ENCODE measurements at regions of chr11 and their contacts with region 1.

Region 1: DNA sequence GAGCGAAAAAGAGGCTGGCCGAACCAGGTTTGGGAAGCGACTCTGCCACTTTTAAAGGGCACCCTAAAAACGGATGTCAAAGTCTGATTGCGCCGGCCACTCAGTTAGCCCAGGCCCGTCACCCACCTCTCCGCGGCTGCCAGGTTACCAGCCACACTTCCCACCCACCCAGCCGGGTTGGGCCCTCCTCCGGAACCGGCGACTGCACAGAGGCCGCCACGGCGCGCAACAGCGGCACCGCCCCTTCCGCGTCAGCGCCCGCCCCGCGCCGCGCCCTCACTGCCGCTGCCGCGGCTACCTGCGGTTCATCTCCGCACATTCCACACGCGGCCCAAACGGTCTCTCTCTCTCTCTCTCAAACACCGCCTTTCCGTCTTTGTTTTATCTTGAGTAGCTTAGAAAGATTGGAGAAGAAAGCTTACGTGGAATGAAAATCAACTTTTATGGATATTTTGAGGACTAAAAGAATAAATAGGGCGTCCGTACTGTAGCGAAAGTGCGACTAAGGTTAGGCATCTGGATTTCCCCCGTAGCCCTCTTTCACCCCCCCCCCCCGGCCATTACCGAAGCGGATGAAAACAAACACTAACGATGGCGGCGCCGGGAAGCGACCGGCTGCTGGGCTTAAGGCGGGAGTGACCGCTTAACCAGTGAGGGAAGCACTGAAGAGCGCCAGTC is at the starts of genes ATG13 and HARBI1:
- DNase-seq: peak; percentile 98
- H3K4me3 Mint-ChIP-seq: peak within 1 kb of the TSS; percentile 93
- H3K27ac Mint-ChIP-seq: peak within 1 kb of the TSS; percentile 100
- H3K4me1 Mint-ChIP-seq: peaks cover 35% of the 10 kb centered on the region
- H3K27me3 Mint-ChIP-seq: no peaks in the 10 kb centered on the region
- total RNA-seq, gene ATG13: 55.4 and 55.6 TPM in 2 replicates
- total RNA-seq, gene HARBI1: 4.3 and 4.5 TPM in 2 replicates

Region 2: GRCh38 chr11:46389450-46390253 is 227.5 kb before region 1 on chr11:
- intact Hi-C with region 1: loop called (anchors 1 kb)
- DNase-seq: peak; percentile 88
- H3K4me3 Mint-ChIP-seq: peak overlapping the region; percentile 72
- H3K27ac Mint-ChIP-seq: peak overlapping the region; percentile 17
- H3K4me1 Mint-ChIP-seq: peaks cover 26% of the 10 kb centered on the region
- H3K27me3 Mint-ChIP-seq: peaks cover 62% of the 10 kb centered on the region

Region 3: DNA sequence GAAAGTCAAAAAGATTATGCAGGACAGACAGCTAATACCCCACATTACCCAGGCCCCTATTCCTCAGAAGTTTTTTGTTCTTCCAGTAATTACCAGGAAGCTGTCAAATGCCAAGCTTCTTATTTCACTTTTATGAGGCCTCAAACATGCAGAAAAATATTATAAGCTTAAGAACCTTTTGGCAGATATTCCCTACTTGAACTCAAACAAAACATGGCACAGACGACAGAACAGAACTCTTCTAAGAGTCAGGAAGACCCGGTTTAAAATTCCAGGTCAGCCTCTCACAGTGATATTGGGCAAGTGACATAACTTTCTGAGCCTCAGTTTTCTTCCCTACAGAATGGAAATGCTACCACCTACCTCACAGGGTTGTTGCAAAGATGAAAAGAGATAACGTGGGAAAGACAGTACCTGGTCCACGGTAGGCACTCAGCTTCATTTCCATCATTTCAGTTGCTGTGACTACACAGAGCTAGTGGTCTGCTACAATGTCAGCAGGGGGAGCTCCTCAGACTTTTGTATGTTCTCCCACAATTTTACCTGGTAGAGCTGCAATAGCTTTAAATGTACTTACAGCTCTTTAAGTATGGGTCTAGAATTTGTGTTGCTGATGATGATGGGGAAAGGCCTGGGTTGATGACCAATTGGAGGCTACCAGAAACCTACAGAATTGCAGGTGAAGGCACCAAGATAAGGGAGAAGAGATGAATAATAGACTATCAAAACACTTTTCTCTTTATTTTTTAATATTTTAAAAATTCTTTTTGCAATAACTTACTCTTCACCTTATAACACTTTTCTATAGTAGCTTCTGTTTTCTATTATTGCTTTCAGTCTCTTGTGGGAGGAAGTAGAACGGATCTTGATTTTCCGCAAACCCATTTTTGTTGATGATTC is 127.2 kb before region 1 on chr11:
- intact Hi-C with region 1: loop called (anchors 5 kb)
- DNase-seq: peak; percentile 79
- H3K4me3 Mint-ChIP-seq: no peak overlapping the region
- H3K27ac Mint-ChIP-seq: no peak overlapping the region
- H3K4me1 Mint-ChIP-seq: peaks cover 9% of the 10 kb centered on the region
- H3K27me3 Mint-ChIP-seq: no peaks in the 10 kb centered on the region

Region 4: GRCh38 chr11:46547579-46547978 is 69.6 kb before region 1 on chr11:
- intact Hi-C with region 1: no loop called
- DNase-seq: no peak
- H3K4me3 Mint-ChIP-seq: no peak overlapping the region
- H3K27ac Mint-ChIP-seq: no peak overlapping the region
- H3K4me1 Mint-ChIP-seq: peaks cover 4% of the 10 kb centered on the region
- H3K27me3 Mint-ChIP-seq: no peaks in the 10 kb centered on the region

Region 5: DNA sequence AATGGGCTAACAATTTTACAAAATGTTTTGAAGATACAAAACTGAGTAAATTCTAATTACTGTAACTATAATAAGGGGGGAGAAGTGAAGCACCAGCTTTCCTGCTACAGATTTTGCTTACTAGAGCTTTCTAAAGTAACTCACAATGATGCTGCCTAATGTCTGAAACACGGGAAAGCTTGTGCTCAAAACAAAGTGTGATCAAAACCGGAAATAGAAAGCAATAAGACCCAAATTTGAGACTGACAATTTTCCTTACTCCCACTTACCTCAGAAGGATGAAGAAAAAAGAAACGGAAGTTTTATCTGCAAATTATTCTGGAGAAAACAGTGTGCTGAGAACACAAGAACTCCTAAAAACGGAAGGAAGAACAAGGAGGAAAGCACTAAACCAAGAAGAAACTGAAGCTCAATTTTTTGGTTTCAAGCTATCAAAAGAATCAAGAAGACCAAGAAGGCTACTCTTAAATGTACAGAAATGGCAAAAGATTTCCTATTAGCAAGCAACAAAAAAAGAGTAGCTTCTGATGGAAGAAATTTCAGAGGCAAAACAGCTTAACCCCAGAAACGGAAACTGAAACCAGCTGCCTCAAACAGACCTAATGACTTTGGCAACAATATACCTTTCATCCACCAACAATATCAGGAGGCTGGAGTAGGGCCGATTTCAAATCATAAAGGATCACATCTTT is 56.7 kb before region 1 on chr11:
- intact Hi-C with region 1: loop called (anchors 2 kb)
- DNase-seq: peak; percentile 81
- H3K4me3 Mint-ChIP-seq: peak overlapping the region; percentile 89
- H3K27ac Mint-ChIP-seq: peak overlapping the region; percentile 87
- H3K4me1 Mint-ChIP-seq: peaks cover 53% of the 10 kb centered on the region
- H3K27me3 Mint-ChIP-seq: no peaks in the 10 kb centered on the region

Region 6: DNA sequence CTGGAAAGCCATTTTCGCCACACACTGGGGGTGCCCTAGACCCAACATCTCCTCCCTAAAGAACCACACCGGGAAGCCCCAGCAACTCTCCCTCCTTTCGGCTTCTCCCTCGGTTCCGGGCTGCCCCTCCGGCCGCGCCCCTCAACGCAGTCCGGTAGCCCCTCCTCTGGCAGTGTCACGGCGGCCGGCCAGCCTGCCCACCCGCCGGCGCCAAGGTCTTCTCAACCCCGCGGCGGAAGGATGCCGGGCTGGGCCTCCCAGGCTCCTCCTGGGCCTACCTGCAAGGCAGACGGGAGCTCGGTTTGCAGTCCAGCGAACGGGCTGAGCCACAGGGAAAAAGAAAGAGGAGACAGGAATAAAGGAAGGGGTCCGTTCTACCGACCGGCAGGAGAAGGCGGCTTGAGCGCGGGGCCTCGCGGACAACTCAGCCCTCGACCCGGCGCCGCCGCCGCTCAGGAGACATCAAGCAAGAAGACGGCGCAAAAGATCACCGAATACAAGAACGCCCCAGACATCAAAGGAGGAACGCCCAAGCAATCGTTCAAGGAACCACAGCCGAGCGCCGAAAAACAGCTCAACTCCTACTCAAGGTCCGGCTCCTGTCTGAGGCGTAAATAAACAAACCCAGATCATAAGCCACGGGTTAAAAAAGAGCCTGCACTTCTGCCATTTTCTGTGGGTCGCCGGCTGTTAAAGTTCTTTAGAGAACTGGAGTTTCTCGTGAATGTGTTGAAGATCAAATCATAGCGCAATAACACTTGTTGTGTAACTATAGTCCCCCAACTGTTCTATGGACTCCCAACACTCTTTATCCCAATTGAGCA is 23.4 kb before region 1 on chr11 and contains the start of gene AMBRA1:
- intact Hi-C with region 1: loop called (anchors 1 kb)
- DNase-seq: peak; percentile 96
- H3K4me3 Mint-ChIP-seq: peak within 1 kb of the TSS; percentile 99
- H3K27ac Mint-ChIP-seq: peak within 1 kb of the TSS; percentile 96
- H3K4me1 Mint-ChIP-seq: peaks cover 34% of the 10 kb centered on the region
- H3K27me3 Mint-ChIP-seq: no peaks in the 10 kb centered on the region
- total RNA-seq, gene AMBRA1: 27.7 and 34.9 TPM in 2 replicates

Region 7: DNA sequence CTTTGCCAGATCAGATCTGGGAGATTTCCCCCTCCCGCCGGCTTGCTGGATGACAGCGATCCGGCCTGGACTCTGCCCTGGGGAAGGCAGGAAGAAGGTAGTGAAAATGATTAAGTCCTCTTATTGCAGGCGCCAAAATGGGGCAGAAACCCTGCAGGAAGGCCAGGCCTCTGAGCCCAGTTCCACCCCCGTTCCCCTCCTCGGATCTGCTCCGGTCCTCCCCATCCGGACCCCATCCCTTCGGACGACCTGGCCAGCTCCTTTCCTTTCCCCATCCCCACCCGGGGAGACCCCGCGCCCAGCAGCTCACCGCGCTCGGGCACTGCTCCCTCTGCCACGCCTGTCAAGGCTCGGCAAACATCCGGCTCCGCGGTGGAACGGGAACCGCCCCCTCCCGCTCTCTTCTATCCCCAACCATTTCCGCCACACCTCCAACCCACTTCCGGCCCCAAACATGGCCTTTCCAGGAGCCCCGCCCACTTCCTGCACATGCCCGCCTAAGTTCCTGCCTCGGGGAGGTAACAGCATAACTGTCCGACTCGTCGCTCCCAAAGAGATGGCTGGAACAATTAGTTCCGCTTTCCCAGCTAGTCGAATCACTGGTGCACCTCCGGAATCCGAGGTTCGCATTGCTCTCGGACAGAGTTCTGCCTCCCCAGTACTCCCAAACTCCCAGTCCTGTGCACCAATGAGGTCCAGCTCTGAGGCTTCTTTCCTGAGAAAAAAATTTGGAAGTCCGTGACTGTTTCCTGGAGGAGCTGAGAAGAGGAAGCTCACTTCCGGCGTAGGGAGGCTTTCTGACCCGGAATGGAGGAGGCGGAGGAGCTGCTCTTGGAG is 83.3 kb after region 1 on chr11 and contains the starts of genes ARHGAP1 and ZNF408:
- intact Hi-C with region 1: loop called (anchors 1 kb)
- DNase-seq: peak; percentile 100
- H3K4me3 Mint-ChIP-seq: peak within 1 kb of the TSS; percentile 99
- H3K27ac Mint-ChIP-seq: peak within 1 kb of the TSS; percentile 98
- H3K4me1 Mint-ChIP-seq: peaks cover 38% of the 10 kb centered on the region
- H3K27me3 Mint-ChIP-seq: peaks cover 3% of the 10 kb centered on the region
- total RNA-seq, gene ARHGAP1: 59.1 and 61.7 TPM in 2 replicates
- total RNA-seq, gene ZNF408: 12.9 and 14.1 TPM in 2 replicates

Region 8: GRCh38 chr11:46936138-46937110 is 319.3 kb after region 1 on chr11 and contains the start of gene CSTPP1:
- intact Hi-C with region 1: loop called (anchors 1 kb)
- DNase-seq: peak; percentile 98
- H3K4me3 Mint-ChIP-seq: peak within 1 kb of the TSS; percentile 89
- H3K27ac Mint-ChIP-seq: peak within 1 kb of the TSS; percentile 94
- H3K4me1 Mint-ChIP-seq: peaks cover 14% of the 10 kb centered on the region
- H3K27me3 Mint-ChIP-seq: peaks cover 7% of the 10 kb centered on the region
- total RNA-seq, gene CSTPP1: 16.9 and 18.0 TPM in 2 replicates

Measured in activated CD4-positive, alpha-beta T cell treated with anti-CD3 and anti-CD28 coated beads, Interleukin-2, amount 10 ng/mL, durations not matched to agents 24 days and 14 days (primary cell).